ENCODE measurements at regions of chr1 and their contacts with region 1.

Region 1: DNA sequence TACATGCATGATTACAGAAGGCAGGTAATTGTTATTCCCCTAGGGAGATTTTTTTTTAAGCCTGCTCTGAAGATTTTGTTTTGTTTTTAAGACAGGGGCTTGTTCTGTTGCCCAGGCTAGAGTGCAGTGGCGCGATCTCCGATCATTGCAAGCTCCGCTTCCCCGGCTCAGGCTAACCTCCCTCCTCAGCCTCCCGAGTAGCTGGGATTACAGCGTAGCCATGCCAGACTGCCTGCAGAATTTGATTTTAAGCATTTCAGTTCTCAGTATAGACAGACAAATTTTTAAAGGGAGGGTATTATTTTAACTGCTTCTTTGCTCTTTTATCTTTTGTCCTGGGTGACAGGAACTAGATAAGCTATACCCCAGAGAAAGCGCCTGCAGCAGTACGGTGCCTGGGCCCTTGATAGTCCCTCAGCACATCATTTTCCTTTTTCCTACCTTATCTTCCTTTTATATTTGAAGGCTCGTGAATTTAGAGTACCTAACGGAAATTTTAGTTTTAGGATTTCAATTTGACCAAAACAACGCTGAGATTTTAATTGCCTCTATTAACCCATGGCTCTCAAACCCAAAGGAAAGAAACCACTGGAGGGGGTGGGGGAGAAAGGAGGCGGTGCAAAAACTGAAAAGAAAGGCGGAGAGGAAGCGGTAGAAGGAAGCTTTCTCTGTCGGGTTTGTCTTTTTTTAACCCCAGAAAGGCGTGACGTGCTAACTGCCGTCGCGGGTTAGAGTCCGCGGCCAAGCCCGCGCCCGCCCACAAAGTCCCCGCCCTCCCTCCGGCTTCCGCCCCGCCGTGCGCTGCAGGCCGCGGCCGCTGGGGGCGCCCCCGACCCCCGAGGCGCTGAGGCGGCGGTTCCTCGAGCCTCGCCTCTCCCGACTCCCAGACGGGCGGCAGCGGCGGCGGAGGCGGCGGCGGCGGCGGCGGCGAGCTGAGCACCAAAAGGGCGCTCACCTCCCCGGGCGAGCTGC is at the start of gene EEIG2:
- DNase-seq: peak; percentile 87
- ATAC-seq: peak; percentile 78
- H3K4me3 ChIP-seq: peak within 1 kb of the TSS; percentile 84
- H3K27ac ChIP-seq: no peak within 1 kb of the TSS
- H3K4me1 ChIP-seq: peaks cover 17% of the 10 kb centered on the region
- H3K27me3 ChIP-seq: 0 out of 2 replicates have a peak, but pooled peaks cover 4% of the 10 kb centered on the region
- CTCF ChIP-seq: peak; percentile 56
- total RNA-seq, gene EEIG2: 5.2 and 6.2 TPM in 2 replicates

Region 2: GRCh38 chr1:107782217-107782845 is 777.2 kb before region 1 on chr1:
- CTCF ChIA-PET with region 1: no interaction called
- POLR2A ChIA-PET with region 1: no interaction called
- intact Hi-C with region 1: loop called (anchors 5 kb)
- DNase-seq: peak; percentile 76
- ATAC-seq: peak; percentile 86
- H3K4me3 ChIP-seq: no peak overlapping the region
- H3K27ac ChIP-seq: no peak overlapping the region
- H3K4me1 ChIP-seq: peaks cover 7% of the 10 kb centered on the region
- H3K27me3 ChIP-seq: no peaks in the 10 kb centered on the region
- CTCF ChIP-seq: peak; percentile 88

Region 3: DNA sequence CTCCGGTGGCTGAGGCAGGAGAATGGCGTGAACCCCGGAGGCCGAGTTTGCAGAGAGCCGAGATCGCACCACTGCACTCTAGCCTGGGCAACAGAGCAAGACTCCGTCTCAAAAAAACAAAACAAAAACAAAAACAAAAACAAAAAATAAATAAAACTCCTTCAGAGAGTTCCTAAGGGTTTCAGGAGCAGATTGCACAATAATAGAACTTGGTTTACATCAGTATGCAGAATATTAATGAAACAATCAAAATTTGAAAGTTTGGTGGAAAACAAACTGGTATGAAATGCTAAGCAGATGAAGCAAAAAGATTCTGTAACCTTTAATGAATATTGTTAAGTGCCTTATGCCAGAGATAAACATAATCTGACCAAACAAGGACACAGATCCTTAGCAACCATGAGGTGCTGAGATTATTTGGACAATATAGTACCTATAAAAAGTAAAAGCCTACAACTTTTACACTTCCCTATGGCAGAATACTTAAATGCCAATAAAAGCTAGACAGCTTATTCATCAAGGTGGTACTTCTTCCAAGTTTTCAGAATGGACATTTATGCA is 400.5 kb before region 1 on chr1:
- CTCF ChIA-PET with region 1: interaction called, 12 read pairs
- POLR2A ChIA-PET with region 1: no interaction called
- intact Hi-C with region 1: no loop called
- DNase-seq: no peak
- ATAC-seq: no peak
- H3K4me3 ChIP-seq: no peak overlapping the region
- H3K27ac ChIP-seq: no peak overlapping the region
- H3K4me1 ChIP-seq: no peaks in the 10 kb centered on the region
- H3K27me3 ChIP-seq: no peaks in the 10 kb centered on the region
- CTCF ChIP-seq: no peak

Region 4: GRCh38 chr1:108512239-108512981 is 47.1 kb before region 1 on chr1:
- CTCF ChIA-PET with region 1: interaction called, 9 read pairs
- POLR2A ChIA-PET with region 1: no interaction called
- intact Hi-C with region 1: loop called (anchors 1 kb)
- DNase-seq: peak; percentile 61
- ATAC-seq: peak; percentile 54
- H3K4me3 ChIP-seq: no peak overlapping the region
- H3K27ac ChIP-seq: no peak overlapping the region
- H3K4me1 ChIP-seq: no peaks in the 10 kb centered on the region
- H3K27me3 ChIP-seq: no peaks in the 10 kb centered on the region
- CTCF ChIP-seq: peak; percentile 91

Region 5: DNA sequence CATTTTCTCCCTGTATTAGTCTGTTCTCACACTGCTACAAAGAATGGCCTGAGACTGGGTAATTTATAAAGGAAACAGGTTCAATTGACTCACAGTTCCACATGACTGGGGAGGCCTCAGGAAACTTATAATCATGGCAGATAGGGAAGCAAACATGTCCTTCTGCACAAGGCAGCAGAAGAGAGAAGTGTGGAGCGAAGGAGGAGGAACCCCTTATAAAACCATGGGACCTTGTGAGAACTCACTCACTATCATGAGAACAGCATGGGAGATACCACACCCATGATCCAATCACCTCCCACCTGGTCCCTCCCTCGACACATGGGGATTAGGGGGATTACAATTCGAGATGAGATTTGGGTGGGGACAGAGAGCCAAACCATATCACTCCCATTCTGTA is 34.8 kb before region 1 on chr1:
- CTCF ChIA-PET with region 1: interaction called, 3 read pairs
- POLR2A ChIA-PET with region 1: no interaction called
- intact Hi-C with region 1: loop called (anchors 5 kb)
- DNase-seq: no peak
- ATAC-seq: no peak
- H3K4me3 ChIP-seq: no peak overlapping the region
- H3K27ac ChIP-seq: no peak overlapping the region
- H3K4me1 ChIP-seq: no peaks in the 10 kb centered on the region
- H3K27me3 ChIP-seq: peaks cover 9% of the 10 kb centered on the region
- CTCF ChIP-seq: no peak

Region 6: DNA sequence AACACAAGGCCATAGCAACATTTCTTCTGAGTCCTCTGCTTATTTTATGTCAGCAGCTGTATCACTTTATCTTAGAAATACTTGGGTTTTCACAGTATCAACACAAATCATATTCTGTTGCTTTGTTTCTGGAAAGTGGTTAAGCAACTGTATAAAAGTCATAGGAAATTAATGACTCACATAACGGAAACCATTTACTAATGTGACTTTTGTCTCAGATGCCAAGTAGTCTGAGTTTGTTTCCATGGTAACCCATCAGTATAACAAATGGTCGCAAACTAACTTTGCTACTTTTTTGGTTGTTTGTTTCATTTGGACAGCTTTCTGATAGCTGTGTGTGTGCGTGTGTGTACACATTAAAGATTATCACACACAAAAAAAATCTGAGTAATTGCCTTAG is 31.5 kb after region 1 on chr1:
- CTCF ChIA-PET with region 1: interaction called, 3 read pairs
- POLR2A ChIA-PET with region 1: no interaction called
- intact Hi-C with region 1: loop called (anchors 5 kb)
- DNase-seq: peak; percentile 78
- ATAC-seq: peak; percentile 51
- H3K4me3 ChIP-seq: no peak overlapping the region
- H3K27ac ChIP-seq: peak overlapping the region; percentile 86
- H3K4me1 ChIP-seq: peaks cover 33% of the 10 kb centered on the region
- H3K27me3 ChIP-seq: no peaks in the 10 kb centered on the region
- CTCF ChIP-seq: no peak

Region 7: DNA sequence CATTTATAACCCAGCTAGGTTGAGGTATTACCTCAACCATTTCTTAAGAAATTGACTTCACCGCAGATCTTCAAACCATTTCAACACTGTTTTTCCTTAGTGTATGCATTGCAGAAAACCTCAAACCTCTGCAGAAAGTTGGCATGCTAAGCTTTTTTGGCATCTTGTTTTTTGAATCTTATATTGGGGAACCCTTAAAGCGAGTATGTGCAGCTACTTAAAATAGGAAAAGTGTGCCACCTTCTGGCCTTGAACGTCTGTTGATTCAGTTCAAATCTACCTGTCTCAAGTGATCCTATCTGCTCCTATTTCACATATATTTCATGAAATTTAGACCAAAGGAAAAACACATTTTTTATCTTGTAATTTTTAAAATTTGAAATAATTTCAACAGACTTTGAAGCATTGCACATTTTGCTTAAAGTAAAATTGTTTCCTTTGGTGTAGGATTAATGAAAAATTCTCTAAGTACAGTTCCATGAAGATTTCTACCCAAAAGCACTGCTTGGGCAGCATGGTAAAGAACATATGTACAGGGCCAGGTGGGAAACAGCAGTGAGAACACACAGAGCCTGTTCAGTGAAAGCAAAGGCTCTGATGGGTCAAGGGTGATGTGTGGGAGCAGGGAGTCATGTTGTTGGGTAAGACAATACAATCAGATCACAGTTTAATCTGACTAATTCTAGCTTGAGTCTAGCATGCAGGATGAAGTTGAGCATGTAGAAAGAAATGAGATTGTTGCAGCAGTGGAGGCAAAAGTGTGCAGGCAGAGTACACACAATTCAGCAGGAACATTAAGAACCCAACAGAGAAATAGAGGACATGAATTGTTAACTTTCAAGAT is 84.2 kb after region 1 on chr1:
- CTCF ChIA-PET with region 1: interaction called, 10 read pairs
- POLR2A ChIA-PET with region 1: interaction called, 4 read pairs
- intact Hi-C with region 1: loop called (anchors 1 kb)
- DNase-seq: peak; percentile 75
- ATAC-seq: peak; percentile 88
- H3K4me3 ChIP-seq: no peak overlapping the region
- H3K27ac ChIP-seq: no peak overlapping the region
- H3K4me1 ChIP-seq: peaks cover 8% of the 10 kb centered on the region
- H3K27me3 ChIP-seq: no peaks in the 10 kb centered on the region
- CTCF ChIP-seq: peak; percentile 89

Measured in PC-3 (cell line).